CD14-positive monocyte (primary cell): ENCODE measurements at regions of chr2 and their contacts with region 1.

Region 1: DNA sequence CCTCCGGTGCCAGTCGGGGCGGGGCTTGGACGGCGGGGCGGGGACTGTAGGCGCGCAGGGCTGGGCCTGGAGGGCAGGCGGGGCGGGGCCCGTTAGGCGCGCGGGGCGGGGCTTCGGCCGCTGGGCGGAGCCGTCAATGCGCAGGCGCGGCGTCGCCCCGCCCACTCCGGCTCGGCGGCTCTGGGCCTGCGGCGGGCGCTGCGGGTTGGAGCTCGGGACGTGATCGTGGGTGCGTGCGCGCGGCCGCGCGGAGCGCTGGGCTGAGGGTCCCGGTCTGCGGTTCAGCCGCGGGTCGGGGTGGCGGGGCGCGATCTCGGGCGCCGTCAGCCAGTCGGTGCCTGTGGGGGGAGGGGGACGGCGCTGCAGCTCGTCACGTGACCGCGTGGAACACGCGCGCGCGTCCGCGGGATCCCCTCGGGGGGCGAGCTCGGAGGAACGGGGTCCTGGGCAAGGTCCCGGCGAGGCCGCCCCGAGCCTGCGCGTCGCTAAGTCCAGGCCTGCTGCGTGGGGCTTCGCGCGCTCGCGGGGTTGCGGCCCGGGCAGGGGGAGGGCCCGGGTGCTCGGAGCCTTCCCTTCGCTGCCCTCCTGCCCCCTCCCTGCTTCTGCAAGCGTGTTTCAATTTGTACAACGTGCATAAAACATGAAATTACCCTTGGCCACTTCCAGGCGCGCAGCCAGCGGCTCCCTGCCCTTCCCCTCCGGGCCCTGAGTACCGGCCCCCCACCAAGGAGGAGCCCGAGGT is at the start of gene D2HGDH:
- DNase-seq: peak; percentile 77 to 89 (median 84)
- H3K4me3 ChIP-seq: peak within 1 kb of the TSS; percentile 71 to 93 (median 85)
- H3K4me3 Mint-ChIP-seq: peak within 1 kb of the TSS; percentile 88 to 90
- H3K27ac ChIP-seq: peak within 1 kb of the TSS in 1 of 2 donors; percentile 83
- H3K27ac Mint-ChIP-seq: peak within 1 kb of the TSS; percentile 28 to 80 (median 51)
- H3K4me1 ChIP-seq: peaks cover 19 to 34% of the 10 kb centered on the region in 2 donors
- H3K4me1 Mint-ChIP-seq: peaks cover 29% of the 10 kb centered on the region
- H3K27me3 ChIP-seq: no peaks in the 10 kb centered on the region
- H3K27me3 Mint-ChIP-seq: peaks cover 1 to 5% (median 4%) of the 10 kb centered on the region in 3 donors
- CTCF ChIP-seq: no peak
- polyA plus RNA-seq, gene D2HGDH: 1.0 to 57.1 (median 1.1) TPM

Region 2: GRCh38 chr2:240998120-240998994 is 736.3 kb before region 1 on chr2 and contains the start of gene SNED1:
- intact Hi-C with region 1: loop called in 1 of 2 experiments (anchors 10 kb)
- DNase-seq: peak; percentile 70 to 77 (median 70)
- H3K4me3 ChIP-seq: peak within 1 kb of the TSS; percentile 47 to 79 (median 64)
- H3K4me3 Mint-ChIP-seq: peak within 1 kb of the TSS; percentile 70 to 91
- H3K27ac ChIP-seq: peak within 1 kb of the TSS in 1 of 2 donors; percentile 62
- H3K27ac Mint-ChIP-seq: peak within 1 kb of the TSS in 2 of 7 donors; percentile 45 to 66
- H3K4me1 ChIP-seq: peaks cover 10 to 20% of the 10 kb centered on the region in 2 donors
- H3K4me1 Mint-ChIP-seq: peaks cover 9% of the 10 kb centered on the region
- H3K27me3 ChIP-seq: peaks cover 4 to 47% of the 10 kb centered on the region in 2 donors
- H3K27me3 Mint-ChIP-seq: peaks cover 48 to 79% (median 51%) of the 10 kb centered on the region in 3 donors
- CTCF ChIP-seq: no peak
- polyA plus RNA-seq, gene SNED1: 0.02 to 3.4 (median 0.12) TPM

Region 3: DNA sequence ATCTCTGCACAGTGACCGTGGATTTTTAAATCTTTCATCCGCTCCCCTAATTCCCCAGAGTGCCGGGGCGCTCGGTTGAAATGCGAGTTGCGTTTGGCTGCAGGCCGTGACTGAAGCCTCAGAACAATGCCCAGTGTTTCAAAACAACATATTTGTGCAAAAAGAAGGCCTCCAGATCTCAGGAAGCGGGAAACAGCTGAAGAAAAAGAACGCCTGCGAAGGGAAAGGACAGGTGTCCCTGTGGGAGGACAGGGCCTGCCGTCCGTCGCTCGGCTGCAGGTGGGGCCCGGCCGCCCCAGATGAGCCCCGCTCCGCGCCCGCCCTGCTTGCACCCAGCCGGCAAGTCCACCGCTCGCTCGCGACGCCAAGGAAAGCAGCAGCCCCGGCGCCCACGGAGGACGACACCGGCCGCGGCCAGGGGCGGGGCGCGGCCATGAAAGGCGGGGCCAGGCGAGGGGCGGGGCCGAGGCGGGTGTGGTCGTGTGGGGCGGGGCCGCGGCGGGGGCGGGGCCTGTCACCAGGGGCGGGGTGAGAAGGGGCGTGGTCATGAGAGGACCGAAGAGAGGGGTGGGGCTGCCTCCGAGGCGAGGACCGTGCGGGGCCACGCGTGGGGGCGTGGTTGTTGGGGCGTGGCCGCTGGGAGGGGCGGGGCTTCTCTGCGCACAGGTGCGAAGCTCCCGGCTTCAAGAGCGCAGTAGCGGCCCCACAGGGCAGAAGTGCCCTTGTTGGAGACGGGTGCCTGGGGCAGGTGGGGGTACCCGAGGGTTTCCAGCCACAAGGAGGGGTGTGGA is 193.7 kb before region 1 on chr2:
- intact Hi-C with region 1: no loop called
- DNase-seq: peak; percentile 0 to 33 (median 3)
- H3K4me3 ChIP-seq: peak overlapping the region in 2 of 3 experiments; percentile 9 to 69
- H3K4me3 Mint-ChIP-seq: peak overlapping the region; percentile 73 to 95
- H3K27ac ChIP-seq: no peak overlapping the region
- H3K27ac Mint-ChIP-seq: no peak overlapping the region
- H3K4me1 ChIP-seq: peaks cover 6 to 12% of the 10 kb centered on the region in 2 donors
- H3K4me1 Mint-ChIP-seq: peaks cover 5% of the 10 kb centered on the region
- H3K27me3 ChIP-seq: peaks cover 3 to 45% of the 10 kb centered on the region in 2 donors
- H3K27me3 Mint-ChIP-seq: peaks cover 40 to 56% (median 42%) of the 10 kb centered on the region in 3 donors
- CTCF ChIP-seq: no peak

Region 4: GRCh38 chr2:241686649-241687425 is 47.8 kb before region 1 on chr2 and contains the start of gene DTYMK:
- intact Hi-C with region 1: loop called (anchors 10 kb)
- DNase-seq: peak; percentile 92 to 97 (median 96)
- H3K4me3 ChIP-seq: peak within 1 kb of the TSS; percentile 87 to 92 (median 89)
- H3K4me3 Mint-ChIP-seq: peak within 1 kb of the TSS; percentile 89 to 94
- H3K27ac ChIP-seq: peak within 1 kb of the TSS; percentile 50 to 89
- H3K27ac Mint-ChIP-seq: peak within 1 kb of the TSS; percentile 80 to 96 (median 89)
- H3K4me1 ChIP-seq: peaks cover 20 to 24% of the 10 kb centered on the region in 2 donors
- H3K4me1 Mint-ChIP-seq: peaks cover 25% of the 10 kb centered on the region
- H3K27me3 ChIP-seq: no peaks in the 10 kb centered on the region
- H3K27me3 Mint-ChIP-seq: peaks cover 0 to 1% (median 0%) of the 10 kb centered on the region in 3 donors
- CTCF ChIP-seq: no peak
- polyA plus RNA-seq, gene DTYMK: 13.0 to 23.5 (median 18.7) TPM

Region 5: DNA sequence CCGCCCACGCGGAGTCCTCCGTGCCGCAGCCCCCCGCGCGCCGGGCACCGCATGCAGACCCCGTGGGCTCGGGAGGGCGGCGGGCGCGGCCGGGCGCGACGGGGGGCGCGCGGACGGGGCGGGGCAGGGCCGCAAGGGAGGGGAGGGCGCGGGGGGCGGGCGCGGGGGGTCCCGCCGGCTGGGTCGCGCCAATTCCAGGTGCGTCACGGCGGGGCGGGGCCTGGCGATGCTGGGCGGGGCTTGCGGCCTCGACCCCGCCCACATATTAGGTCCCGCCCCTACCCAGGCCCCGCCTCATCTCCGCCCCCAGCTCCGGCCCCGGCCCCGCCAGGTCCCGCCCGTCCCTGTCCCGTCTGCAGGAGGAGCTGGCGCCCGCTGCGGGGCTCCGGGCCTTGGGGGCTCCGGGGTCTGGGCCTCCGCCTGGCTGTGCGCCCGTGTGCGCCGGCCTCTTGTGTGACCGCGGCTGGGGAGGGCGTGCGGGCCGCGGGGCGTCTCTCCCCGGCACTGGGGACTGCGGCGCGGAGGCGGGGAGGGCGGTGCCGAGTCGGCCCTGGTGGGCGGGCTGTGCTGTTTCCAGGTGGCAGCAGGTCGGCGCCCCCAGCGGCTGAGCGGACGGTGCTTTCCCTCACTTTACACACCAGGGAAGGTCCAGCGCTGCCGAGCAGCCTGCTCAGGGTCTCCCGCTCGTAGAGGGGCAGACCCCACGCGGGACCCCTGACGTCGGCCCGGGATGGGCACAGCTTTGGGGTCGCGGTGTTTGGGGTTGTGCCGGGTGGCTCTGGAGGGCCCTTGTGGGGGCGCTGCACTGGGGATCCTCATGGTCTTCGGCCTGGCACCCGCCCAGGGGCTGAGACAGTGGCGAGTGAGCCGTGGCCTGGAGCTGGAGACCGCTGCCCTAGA is 32.3 kb before region 1 on chr2:
- intact Hi-C with region 1: loop called (anchors 2 kb)
- DNase-seq: peak; percentile 51 to 73 (median 62)
- H3K4me3 ChIP-seq: peak overlapping the region; percentile 38 to 86 (median 65)
- H3K4me3 Mint-ChIP-seq: peak overlapping the region; percentile 78 to 80
- H3K27ac ChIP-seq: peak overlapping the region; percentile 68 to 79
- H3K27ac Mint-ChIP-seq: peak overlapping the region in 4 of 7 donors; percentile 27 to 41 (median 34)
- H3K4me1 ChIP-seq: peaks cover 15 to 22% of the 10 kb centered on the region in 2 donors
- H3K4me1 Mint-ChIP-seq: peaks cover 16% of the 10 kb centered on the region
- H3K27me3 ChIP-seq: no peaks in the 10 kb centered on the region
- H3K27me3 Mint-ChIP-seq: peaks cover 0 to 8% (median 0%) of the 10 kb centered on the region in 3 donors
- CTCF ChIP-seq: no peak

Region 6: GRCh38 chr2:241877989-241878970 is 143.6 kb after region 1 on chr2:
- intact Hi-C with region 1: loop called (anchors 2 to 10 kb)
- DNase-seq: peak; percentile 40 to 62 (median 58)
- H3K4me3 ChIP-seq: no peak overlapping the region
- H3K4me3 Mint-ChIP-seq: no peak overlapping the region
- H3K27ac ChIP-seq: no peak overlapping the region
- H3K27ac Mint-ChIP-seq: peak overlapping the region in 1 of 7 donors; percentile 40
- H3K4me1 ChIP-seq: peaks cover 20 to 21% of the 10 kb centered on the region in 2 donors
- H3K4me1 Mint-ChIP-seq: peaks cover 15% of the 10 kb centered on the region
- H3K27me3 ChIP-seq: no peaks in the 10 kb centered on the region
- H3K27me3 Mint-ChIP-seq: peaks cover 0 to 10% (median 2%) of the 10 kb centered on the region in 3 donors
- CTCF ChIP-seq: peak; percentile 56